Astrocyte of the spinal cord (primary cell): ENCODE measurements at regions of chr16 and their contacts with region 1.

Region 1: DNA sequence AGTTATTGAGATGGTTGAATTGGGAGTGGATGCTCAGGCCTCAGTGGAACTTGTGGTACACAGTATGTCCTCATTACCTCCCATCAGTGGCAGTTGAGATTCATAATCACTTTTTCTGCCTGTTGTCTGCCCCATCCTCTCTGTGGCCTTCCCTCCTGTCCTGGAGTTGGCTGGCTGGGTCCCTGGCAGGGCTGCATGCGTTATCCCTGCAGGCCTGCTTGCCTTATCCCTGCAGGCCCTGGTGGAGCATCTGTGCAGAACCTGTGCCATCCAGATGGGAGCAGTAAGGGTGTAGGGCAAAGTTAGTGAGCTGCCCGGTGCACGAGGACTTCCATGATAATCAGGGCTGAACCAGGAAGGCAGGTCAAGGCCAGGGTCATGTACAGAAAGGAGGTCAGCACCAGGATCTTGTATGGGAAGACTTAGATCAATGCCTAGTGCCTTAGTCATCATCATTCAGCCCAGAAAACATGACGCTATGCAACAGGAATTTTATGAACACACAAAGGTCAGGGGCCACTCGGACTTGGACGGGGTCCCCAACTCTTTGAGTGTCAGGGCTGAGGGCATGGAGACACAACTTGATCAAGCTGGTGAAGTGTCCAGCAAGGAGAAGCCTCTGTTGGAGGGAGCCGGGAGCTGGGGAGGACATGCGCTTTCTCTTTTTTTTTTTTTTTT is 47.2 kb downstream of the ABCC1 start:
- DNase-seq: peak; percentile 87
- H3K4me3 ChIP-seq: no peak overlapping the region
- CTCF ChIP-seq: no peak

Region 2: GRCh38 chr16:15888072-15888976 is 108.2 kb before region 1 on chr16 and contains the start of gene CEP20:
- in situ Hi-C with region 1: loop called (anchors 25 kb)
- DNase-seq: peak; percentile 99
- H3K4me3 ChIP-seq: peak within 1 kb of the TSS; percentile 69
- CTCF ChIP-seq: no peak

Region 3: DNA sequence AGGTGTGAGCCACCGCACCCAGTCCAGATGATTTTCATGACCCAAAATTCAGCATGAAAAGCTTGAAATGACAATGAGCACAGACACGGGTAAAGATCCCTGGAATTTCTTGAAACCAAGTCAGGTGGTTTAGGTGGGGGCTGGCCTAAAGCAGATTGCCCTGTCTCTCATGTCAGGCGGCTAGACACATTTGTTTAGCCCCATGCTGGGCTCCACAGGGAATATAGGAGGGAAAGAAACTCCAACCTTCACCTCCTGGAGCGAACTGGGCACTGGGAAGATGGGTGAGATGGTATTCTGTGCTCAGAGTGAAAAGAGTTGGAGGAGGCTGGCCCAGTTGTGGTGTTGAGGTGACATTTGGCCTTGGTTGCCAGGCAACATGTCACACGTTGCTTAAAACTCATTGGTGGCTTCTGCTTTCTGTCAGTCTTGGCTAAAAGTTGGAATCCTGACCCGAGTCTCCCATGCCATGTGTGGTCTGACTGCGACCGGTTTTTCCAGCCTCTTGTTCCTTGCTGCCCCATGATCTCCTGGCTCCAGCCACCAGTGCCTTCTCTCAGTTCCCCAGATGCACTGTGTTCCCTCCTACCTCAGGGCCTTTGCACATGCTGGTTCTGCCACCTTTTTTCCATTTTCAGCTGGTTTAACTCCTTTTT is 113.0 kb after region 1 on chr16:
- in situ Hi-C with region 1: no loop called
- DNase-seq: no peak
- H3K4me3 ChIP-seq: no peak overlapping the region
- CTCF ChIP-seq: no peak